Calu3 (cell line): ENCODE measurements at regions of chr6 and their contacts with region 1.

Region 1: GRCh38 chr6:134097114-134097707 is 44.8 kb upstream of the SLC2A12 start:
- DNase-seq: peak; percentile 74
- H3K4me3 Mint-ChIP-seq: no peak overlapping the region
- H3K27ac Mint-ChIP-seq: no peak overlapping the region
- H3K4me1 Mint-ChIP-seq: no peaks in the 10 kb centered on the region
- H3K27me3 Mint-ChIP-seq: peaks cover 18% of the 10 kb centered on the region
- CTCF ChIP-seq: peak; percentile 73

Region 2: DNA sequence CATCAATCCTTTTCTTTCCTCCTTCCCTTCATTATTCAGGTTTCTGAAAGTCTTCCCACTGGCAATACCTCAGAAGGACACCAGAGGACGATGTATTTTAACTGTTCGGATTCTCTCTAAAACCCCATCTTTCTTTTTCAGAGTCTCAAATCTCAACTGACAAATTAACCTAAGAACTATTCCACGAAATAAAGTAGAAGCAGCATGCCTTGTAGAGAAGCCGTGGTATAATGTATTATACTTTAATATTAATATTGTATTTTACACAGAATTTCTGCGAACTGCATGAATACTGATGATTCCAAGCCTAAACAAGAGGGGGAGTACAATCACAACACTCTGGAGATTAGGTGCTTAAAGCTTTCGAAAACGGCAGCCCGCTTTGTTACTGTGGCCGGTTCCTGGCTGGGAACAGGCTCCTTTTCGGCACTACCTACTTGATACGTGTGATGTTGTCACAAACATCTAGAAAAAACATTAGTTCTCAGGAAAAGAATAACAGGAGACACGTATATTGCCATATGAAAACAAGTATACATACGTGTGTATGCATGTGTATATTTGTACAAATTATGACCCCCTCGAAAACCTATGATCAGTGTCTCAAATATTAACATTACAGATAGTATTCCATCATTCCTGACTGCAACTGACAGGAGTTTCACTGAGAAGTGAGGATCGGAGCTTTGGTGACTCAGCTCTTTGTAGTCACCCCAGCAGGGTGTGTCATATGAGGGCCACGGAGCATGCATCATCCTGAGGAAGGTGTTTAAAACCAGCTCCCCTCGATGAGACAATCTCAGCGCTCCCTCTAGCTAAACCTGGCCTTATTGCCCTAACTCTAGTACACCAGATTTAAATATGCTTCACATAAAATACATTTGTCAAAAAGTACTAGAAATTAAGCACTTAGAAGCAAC is 528.0 kb before region 1 on chr6:
- CTCF ChIA-PET with region 1: interaction called, 4 read pairs
- intact Hi-C with region 1: loop called (anchors 2 kb)
- DNase-seq: peak; percentile 66
- H3K4me3 Mint-ChIP-seq: peak overlapping the region; percentile 63
- H3K27ac Mint-ChIP-seq: peak overlapping the region; percentile 56
- H3K4me1 Mint-ChIP-seq: no peaks in the 10 kb centered on the region
- H3K27me3 Mint-ChIP-seq: no peaks in the 10 kb centered on the region
- CTCF ChIP-seq: peak; percentile 82

Region 3: DNA sequence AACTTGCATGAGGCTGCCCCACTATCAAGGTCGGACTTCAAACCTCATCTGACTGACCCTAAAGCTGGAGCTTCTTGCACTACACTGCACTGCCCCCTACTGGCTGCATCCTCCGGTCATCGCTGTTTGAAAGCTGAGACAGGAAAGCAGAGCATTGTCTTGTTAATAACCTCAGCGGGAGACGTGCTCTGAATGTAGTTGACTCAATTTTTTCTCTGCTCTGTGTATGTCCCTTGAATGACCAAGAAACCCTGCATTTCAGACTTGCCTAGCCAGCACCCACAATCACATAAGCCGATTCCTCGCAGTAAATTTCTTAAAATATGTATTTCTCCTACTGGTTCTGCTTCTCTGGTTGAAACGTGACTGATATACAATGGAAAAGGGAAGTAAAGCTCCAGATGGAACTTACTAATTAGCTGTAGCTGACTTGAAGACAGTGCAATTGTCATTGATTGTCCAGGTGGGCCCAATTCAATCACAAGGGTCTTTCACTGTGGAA is 180.5 kb before region 1 on chr6:
- CTCF ChIA-PET with region 1: interaction called, 11 read pairs
- intact Hi-C with region 1: no loop called
- DNase-seq: peak; percentile 92
- H3K4me3 Mint-ChIP-seq: no peak overlapping the region
- H3K27ac Mint-ChIP-seq: no peak overlapping the region
- H3K4me1 Mint-ChIP-seq: no peaks in the 10 kb centered on the region
- H3K27me3 Mint-ChIP-seq: no peaks in the 10 kb centered on the region
- CTCF ChIP-seq: peak; percentile 85

Region 4: DNA sequence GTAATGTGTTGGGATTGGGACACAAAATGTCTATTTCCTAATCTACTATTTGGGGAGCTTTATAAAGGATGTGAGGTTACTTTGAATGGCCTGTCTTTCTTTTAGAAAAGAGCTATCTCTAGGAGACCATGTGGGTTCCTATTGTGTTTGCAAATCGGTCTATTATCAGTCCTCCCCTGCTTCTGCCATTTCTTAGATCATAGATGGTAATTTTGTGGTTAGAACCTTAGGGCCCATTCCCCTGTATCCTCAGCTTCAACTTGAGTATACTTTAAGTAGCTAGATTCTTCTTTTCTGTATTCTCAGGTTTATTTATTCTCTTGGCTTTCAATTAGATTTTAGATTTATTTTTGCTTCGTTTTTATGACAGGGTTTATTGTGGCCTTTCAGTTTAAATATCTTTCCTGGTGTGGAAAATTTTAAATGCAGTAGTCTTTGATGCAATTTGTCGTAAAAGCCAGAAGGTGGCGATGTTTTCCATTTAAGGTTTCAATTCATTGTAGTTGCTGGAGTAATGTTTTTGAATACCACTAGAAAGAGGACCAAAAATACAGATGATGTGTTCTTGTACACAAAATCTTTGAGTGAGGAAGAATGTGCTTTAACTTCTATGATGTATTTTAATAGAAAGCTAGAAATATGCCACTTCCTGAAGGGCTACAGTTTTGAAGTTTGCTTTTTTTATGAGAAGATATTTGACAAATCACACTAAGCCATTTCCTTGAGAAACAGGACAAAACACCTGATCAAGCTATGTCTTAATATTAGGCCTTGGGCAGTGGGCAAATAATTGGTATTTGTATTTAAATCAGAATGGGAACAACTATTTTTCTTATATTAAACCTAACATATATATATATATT is 123.9 kb before region 1 on chr6:
- CTCF ChIA-PET with region 1: interaction called, 12 read pairs
- intact Hi-C with region 1: loop called (anchors 1 kb)
- DNase-seq: no peak
- H3K4me3 Mint-ChIP-seq: no peak overlapping the region
- H3K27ac Mint-ChIP-seq: peak overlapping the region; percentile 44
- H3K4me1 Mint-ChIP-seq: peaks cover 44% of the 10 kb centered on the region
- H3K27me3 Mint-ChIP-seq: no peaks in the 10 kb centered on the region
- CTCF ChIP-seq: peak; percentile 32

Region 5: GRCh38 chr6:134111062-134111677 is 14.0 kb after region 1 on chr6:
- CTCF ChIA-PET with region 1: interaction called, 11 read pairs
- intact Hi-C with region 1: no loop called
- DNase-seq: peak; percentile 43
- H3K4me3 Mint-ChIP-seq: no peak overlapping the region
- H3K27ac Mint-ChIP-seq: no peak overlapping the region
- H3K4me1 Mint-ChIP-seq: no peaks in the 10 kb centered on the region
- H3K27me3 Mint-ChIP-seq: peaks cover 23% of the 10 kb centered on the region
- CTCF ChIP-seq: peak; percentile 79